Activated B cell treated with CpG ODN at 0.5 μM for 24 hours (primary cell): ENCODE measurements at regions of chr1 and their contacts with region 1.

Region 1: GRCh38 chr1:235892734-235893413 is 26.2 kb upstream of the LYST start:
- DNase-seq: no peak
- ATAC-seq: peak; percentile 69
- H3K4me3 Mint-ChIP-seq: no peak overlapping the region
- H3K27ac Mint-ChIP-seq: no peak overlapping the region
- H3K4me1 Mint-ChIP-seq: peaks cover 34% of the 10 kb centered on the region
- H3K27me3 Mint-ChIP-seq: no peaks in the 10 kb centered on the region
- CTCF ChIP-seq: no peak

Region 2: GRCh38 chr1:235632506-235633401 is 260.1 kb before region 1 on chr1:
- CTCF ChIA-PET with region 1: no interaction called
- POLR2A ChIA-PET with region 1: no interaction called
- intact Hi-C with region 1: no loop called
- DNase-seq: no peak
- ATAC-seq: no peak
- H3K4me3 Mint-ChIP-seq: peak overlapping the region; percentile 62
- H3K27ac Mint-ChIP-seq: no peak overlapping the region
- H3K4me1 Mint-ChIP-seq: peaks cover 10% of the 10 kb centered on the region
- H3K27me3 Mint-ChIP-seq: peaks cover 15% of the 10 kb centered on the region
- CTCF ChIP-seq: no peak

Region 3: GRCh38 chr1:235910357-235911299 is 17.8 kb after region 1 on chr1:
- CTCF ChIA-PET with region 1: no interaction called
- POLR2A ChIA-PET with region 1: interaction called, 3 read pairs
- intact Hi-C with region 1: loop called (anchors 2 kb)
- DNase-seq: no peak
- ATAC-seq: peak; percentile 37
- H3K4me3 Mint-ChIP-seq: no peak overlapping the region
- H3K27ac Mint-ChIP-seq: no peak overlapping the region
- H3K4me1 Mint-ChIP-seq: peaks cover 8% of the 10 kb centered on the region
- H3K27me3 Mint-ChIP-seq: no peaks in the 10 kb centered on the region
- CTCF ChIP-seq: no peak